ENCODE measurements at regions of chr11 and their contacts with region 1.

Region 1: GRCh38 chr11:65418711-65419459 is 3.7 kb upstream of the NEAT1 start:
- DNase-seq: peak; percentile 97
- H3K4me3 ChIP-seq: peak overlapping the region in 1 of 3 experiments; percentile 27
- H3K27ac ChIP-seq: peak overlapping the region; percentile 99
- H3K4me1 ChIP-seq: peaks cover 55% of the 10 kb centered on the region
- H3K27me3 ChIP-seq: no peaks in the 10 kb centered on the region
- CTCF ChIP-seq: no peak
- POLR2A ChIP-seq: no peak

Region 2: GRCh38 chr11:65159012-65159411 is 259.9 kb before region 1 on chr11:
- CTCF ChIA-PET with region 1: no interaction called
- POLR2A ChIA-PET with region 1: no interaction called
- dilution Hi-C with region 1: no loop called
- intact Hi-C with region 1: no loop called
- DNase-seq: no peak
- H3K4me3 ChIP-seq: no peak overlapping the region
- H3K27ac ChIP-seq: no peak overlapping the region
- H3K4me1 ChIP-seq: no peaks in the 10 kb centered on the region
- H3K27me3 ChIP-seq: no peaks in the 10 kb centered on the region
- CTCF ChIP-seq: no peak
- POLR2A ChIP-seq: no peak

Region 3: DNA sequence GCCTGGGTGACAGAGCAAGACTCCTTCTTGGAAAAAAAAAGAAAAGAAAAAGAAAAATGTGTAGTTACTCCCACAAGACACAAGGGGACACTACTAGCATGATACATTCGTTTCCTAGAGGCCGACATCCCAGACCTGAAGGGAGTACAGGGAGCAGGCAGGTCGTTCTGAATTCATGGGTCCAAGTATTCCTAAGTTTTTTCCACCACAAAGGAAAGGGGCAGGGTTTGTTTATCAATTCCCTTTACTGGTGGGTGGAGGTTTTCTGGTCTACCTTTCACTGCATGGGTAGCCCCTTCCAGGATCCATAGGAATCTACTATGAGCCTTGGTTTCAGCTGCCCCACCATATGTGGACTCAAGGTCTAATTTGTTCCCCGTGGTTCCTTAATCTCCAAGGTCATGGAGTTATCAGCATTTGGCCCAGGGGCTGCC is 52.5 kb before region 1 on chr11:
- CTCF ChIA-PET with region 1: interaction called, 5 read pairs
- POLR2A ChIA-PET with region 1: interaction called, 4 read pairs
- dilution Hi-C with region 1: no loop called
- intact Hi-C with region 1: loop called (anchors 10 kb)
- DNase-seq: peak; percentile 78
- H3K4me3 ChIP-seq: no peak overlapping the region
- H3K27ac ChIP-seq: no peak overlapping the region
- H3K4me1 ChIP-seq: peaks cover 7% of the 10 kb centered on the region
- H3K27me3 ChIP-seq: no peaks in the 10 kb centered on the region
- CTCF ChIP-seq: peak; percentile 49 to 66
- POLR2A ChIP-seq: no peak

Region 4: GRCh38 chr11:65404638-65405339 is 14.1 kb before region 1 on chr11:
- CTCF ChIA-PET with region 1: interaction called, 10 read pairs
- POLR2A ChIA-PET with region 1: no interaction called
- dilution Hi-C with region 1: no loop called
- intact Hi-C with region 1: no loop called
- DNase-seq: no peak
- H3K4me3 ChIP-seq: no peak overlapping the region
- H3K27ac ChIP-seq: no peak overlapping the region
- H3K4me1 ChIP-seq: no peaks in the 10 kb centered on the region
- H3K27me3 ChIP-seq: no peaks in the 10 kb centered on the region
- CTCF ChIP-seq: no peak
- POLR2A ChIP-seq: no peak

Region 5: GRCh38 chr11:65436412-65437032 is 17.6 kb after region 1 on chr11:
- CTCF ChIA-PET with region 1: interaction called, 8 read pairs
- POLR2A ChIA-PET with region 1: interaction called, 11 read pairs
- dilution Hi-C with region 1: no loop called
- intact Hi-C with region 1: no loop called
- DNase-seq: peak; percentile 37
- H3K4me3 ChIP-seq: no peak overlapping the region
- H3K27ac ChIP-seq: no peak overlapping the region
- H3K4me1 ChIP-seq: peaks cover 10% of the 10 kb centered on the region
- H3K27me3 ChIP-seq: no peaks in the 10 kb centered on the region
- CTCF ChIP-seq: no peak
- POLR2A ChIP-seq: no peak

Region 6: GRCh38 chr11:65471410-65471762 is 52.5 kb after region 1 on chr11:
- CTCF ChIA-PET with region 1: interaction called, 11 read pairs
- POLR2A ChIA-PET with region 1: interaction called, 10 read pairs
- dilution Hi-C with region 1: no loop called
- intact Hi-C with region 1: loop called (anchors 1 kb)
- DNase-seq: peak; percentile 83
- H3K4me3 ChIP-seq: no peak overlapping the region
- H3K27ac ChIP-seq: peak overlapping the region; percentile 89
- H3K4me1 ChIP-seq: peaks cover 19% of the 10 kb centered on the region
- H3K27me3 ChIP-seq: no peaks in the 10 kb centered on the region
- CTCF ChIP-seq: peak; percentile 70 to 78
- POLR2A ChIP-seq: no peak

Region 7: GRCh38 chr11:65497141-65498041 is 78.5 kb after region 1 on chr11:
- CTCF ChIA-PET with region 1: interaction called, 3 read pairs
- POLR2A ChIA-PET with region 1: interaction called, 68 read pairs
- dilution Hi-C with region 1: no loop called
- intact Hi-C with region 1: no loop called
- DNase-seq: peak; percentile 99
- H3K4me3 ChIP-seq: peak overlapping the region; percentile 0 to 91 (median 48)
- H3K27ac ChIP-seq: peak overlapping the region; percentile 95
- H3K4me1 ChIP-seq: peaks cover 45% of the 10 kb centered on the region
- H3K27me3 ChIP-seq: no peaks in the 10 kb centered on the region
- CTCF ChIP-seq: no peak
- POLR2A ChIP-seq: peak; percentile 98

Region 8: DNA sequence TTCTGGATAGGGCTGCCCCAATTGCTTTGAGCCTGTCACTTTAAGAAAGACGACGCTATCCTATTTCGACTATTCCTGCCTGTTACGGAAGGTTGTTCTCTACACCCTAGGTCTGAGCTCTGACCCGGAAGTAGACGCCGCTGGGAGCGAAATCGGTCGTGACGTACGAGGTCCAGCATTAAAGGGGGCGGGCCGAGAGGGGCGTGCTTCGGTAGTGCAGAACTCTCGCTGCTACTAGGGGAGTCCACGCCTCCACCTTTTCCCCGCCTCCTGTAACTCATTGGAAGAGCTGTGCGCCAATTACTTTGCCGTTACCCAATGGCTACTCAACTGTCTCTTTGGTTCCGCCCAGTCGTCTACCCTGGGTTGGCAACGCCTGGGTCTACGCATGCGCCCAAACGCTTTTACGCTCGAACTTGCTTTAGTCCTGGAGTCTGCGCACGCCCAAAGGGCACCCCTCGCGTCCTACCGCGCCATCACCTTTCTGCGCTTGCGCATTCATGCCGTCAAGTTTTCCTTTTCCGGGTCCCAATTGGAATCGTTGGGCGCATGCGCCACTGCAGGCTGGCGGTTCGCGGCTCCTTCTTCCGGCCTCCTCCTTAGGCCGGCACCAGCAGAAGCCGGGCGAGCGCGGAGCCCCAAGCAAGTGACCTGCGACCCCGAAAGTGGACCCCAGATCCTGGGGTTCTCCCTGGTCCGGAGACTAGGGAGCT is 196.5 kb after region 1 on chr11 and contains the start of gene PCNX3:
- CTCF ChIA-PET with region 1: no interaction called
- POLR2A ChIA-PET with region 1: interaction called, 3 read pairs
- dilution Hi-C with region 1: no loop called
- intact Hi-C with region 1: loop called (anchors 1 kb)
- DNase-seq: peak; percentile 100
- H3K4me3 ChIP-seq: peak within 1 kb of the TSS; percentile 81 to 90 (median 87)
- H3K27ac ChIP-seq: peak within 1 kb of the TSS; percentile 88
- H3K4me1 ChIP-seq: peaks cover 39% of the 10 kb centered on the region
- H3K27me3 ChIP-seq: no peaks in the 10 kb centered on the region
- CTCF ChIP-seq: no peak
- POLR2A ChIP-seq: peak; percentile 59
- total RNA-seq, gene PCNX3: 53.8 and 53.9 TPM in 2 replicates